Gastrocnemius medialis (tissue), 4 donors: ENCODE measurements at regions of chr14 and their contacts with region 1.

Region 1: GRCh38 chr14:99604283-99604765 is 317 bp upstream of the CCDC85C start:
- DNase-seq: peak; percentile 88 to 93
- ATAC-seq: peak; percentile 86 to 87
- H3K4me3 ChIP-seq: peak overlapping the region; percentile 85 to 96 (median 90)
- H3K27ac ChIP-seq: peak overlapping the region; percentile 94 to 99 (median 96)
- H3K4me1 ChIP-seq: peaks cover 23 to 26% of the 10 kb centered on the region in 2 donors
- H3K27me3 ChIP-seq: no peaks in the 10 kb centered on the region
- CTCF ChIP-seq: peak in 1 of 5 experiments; percentile 10
- POLR2A ChIP-seq: peak; percentile 36 to 78

Region 2: DNA sequence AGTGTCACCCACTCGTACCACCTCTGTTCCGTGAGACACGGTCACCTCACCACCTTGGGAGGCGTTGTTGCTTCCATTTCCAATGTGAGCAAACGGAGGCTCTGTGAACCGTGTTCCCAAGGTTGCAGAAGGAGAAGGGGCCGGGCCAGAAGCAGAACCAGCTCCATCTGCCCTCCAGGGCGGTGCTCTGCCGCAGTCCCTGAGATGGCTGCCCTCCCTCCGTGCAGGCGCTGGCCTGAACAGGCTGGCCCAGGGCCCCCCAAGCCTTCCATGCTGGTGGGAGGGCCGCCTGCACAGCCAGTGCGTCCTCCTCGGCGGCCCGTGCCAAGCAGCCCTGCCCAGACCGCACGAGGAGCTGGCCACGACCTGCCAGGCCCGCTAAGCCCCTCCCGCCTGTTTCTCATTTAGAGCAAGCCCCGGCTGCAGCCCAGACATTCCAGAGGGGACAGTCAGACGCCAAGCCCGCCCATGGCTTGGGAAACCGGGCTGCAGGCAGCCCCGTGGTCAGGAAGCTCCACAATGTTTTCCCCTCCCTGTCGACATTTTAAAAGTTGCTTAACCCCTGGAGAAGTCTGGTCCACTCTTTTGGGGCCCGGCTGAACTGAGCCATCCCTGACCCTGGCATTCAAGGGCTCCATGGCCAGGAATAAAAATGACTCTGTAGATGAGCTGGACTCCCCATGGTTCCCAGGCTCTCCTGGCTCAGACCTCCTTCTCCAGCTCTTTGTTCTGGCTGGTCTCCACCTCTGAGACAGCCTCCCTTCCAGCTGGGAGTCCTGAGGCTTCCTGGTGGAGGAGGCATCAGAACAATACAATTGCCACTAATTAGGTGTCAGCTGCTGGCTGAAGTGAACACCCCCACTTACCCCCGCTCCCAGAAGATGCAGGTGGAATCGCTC is 568.4 kb before region 1 on chr14:
- in situ Hi-C with region 1: no loop called
- intact Hi-C with region 1: loop called (anchors 10 kb)
- DNase-seq: peak; percentile 62 to 85
- ATAC-seq: peak; percentile 93 to 95
- H3K4me3 ChIP-seq: peak overlapping the region; percentile 1 to 30 (median 23)
- H3K27ac ChIP-seq: peak overlapping the region; percentile 3 to 78 (median 60)
- H3K4me1 ChIP-seq: peaks cover 3 to 9% of the 10 kb centered on the region in 2 donors
- H3K27me3 ChIP-seq: no peaks in the 10 kb centered on the region
- CTCF ChIP-seq: no peak
- POLR2A ChIP-seq: no peak

Region 3: GRCh38 chr14:99480917-99481744 is 123.2 kb before region 1 on chr14 and contains the start of gene CCNK:
- in situ Hi-C with region 1: no loop called
- intact Hi-C with region 1: loop called (anchors 1 kb)
- DNase-seq: peak; percentile 100
- ATAC-seq: peak; percentile 85 to 87
- H3K4me3 ChIP-seq: peak within 1 kb of the TSS; percentile 89 to 100 (median 94)
- H3K27ac ChIP-seq: peak within 1 kb of the TSS; percentile 92 to 98 (median 95)
- H3K4me1 ChIP-seq: peaks cover 42 to 60% of the 10 kb centered on the region in 2 donors
- H3K27me3 ChIP-seq: no peaks in the 10 kb centered on the region
- CTCF ChIP-seq: peak in 1 of 5 experiments; percentile 12
- POLR2A ChIP-seq: peak; percentile 92 to 96
- total RNA-seq, gene CCNK: 15.0 to 35.3 (median 19.1) TPM

Region 4: DNA sequence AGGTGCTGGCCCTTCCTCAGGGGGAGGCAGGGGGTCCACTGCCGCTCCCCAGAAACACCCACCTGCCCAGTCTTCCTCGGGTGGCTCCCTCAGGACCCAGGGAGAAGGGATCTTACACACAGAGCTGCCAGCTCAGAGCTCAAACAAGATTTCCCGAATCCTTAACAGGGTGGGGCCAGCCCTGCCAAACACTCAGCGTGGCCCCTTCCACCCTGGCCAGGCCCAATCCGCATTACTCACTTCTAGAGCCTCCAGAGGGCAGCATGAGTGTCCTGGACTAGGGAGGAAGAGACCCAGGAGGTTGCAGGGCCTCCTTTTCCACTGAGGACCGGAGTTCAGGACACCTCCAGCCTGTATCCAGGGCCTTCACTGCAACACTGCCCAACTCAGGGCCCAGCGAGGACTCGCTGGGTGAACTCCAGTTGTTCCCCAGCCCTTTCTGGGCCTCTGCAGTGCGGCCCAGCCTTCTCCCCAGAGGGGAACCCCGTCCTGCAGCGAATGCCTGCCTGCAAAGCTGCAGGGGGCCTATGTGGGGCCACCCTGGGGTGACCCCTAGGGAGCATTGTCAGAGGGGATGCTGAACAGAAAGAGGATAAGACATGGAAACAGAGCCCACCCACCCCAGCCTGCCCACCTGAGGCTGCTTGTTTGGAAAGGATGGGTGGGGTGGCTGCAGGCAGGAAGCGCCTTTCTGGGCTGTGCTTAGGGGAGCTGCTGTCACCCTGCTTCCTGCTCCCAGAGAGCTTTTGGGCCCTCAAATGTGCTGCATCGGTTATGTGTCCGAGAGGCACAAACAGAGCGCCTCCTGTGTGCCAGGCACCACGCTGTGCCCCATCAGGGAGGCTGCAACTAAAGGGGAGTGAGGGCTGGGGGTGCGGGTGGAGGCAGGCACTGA is 79.3 kb before region 1 on chr14:
- in situ Hi-C with region 1: no loop called
- intact Hi-C with region 1: no loop called
- DNase-seq: no peak
- ATAC-seq: peak in 1 of 2 donors; percentile 28
- H3K4me3 ChIP-seq: no peak overlapping the region
- H3K27ac ChIP-seq: peak overlapping the region in 2 of 4 donors; percentile 4 to 46
- H3K4me1 ChIP-seq: no peaks in the 10 kb centered on the region
- H3K27me3 ChIP-seq: no peaks in the 10 kb centered on the region
- CTCF ChIP-seq: no peak
- POLR2A ChIP-seq: no peak

Region 5: GRCh38 chr14:99563233-99564129 is 40.8 kb before region 1 on chr14:
- in situ Hi-C with region 1: no loop called
- intact Hi-C with region 1: loop called (anchors 2 kb)
- DNase-seq: peak; percentile 43 to 66
- ATAC-seq: peak; percentile 67 to 73
- H3K4me3 ChIP-seq: no peak overlapping the region
- H3K27ac ChIP-seq: no peak overlapping the region
- H3K4me1 ChIP-seq: peaks cover 21 to 35% of the 10 kb centered on the region in 2 donors
- H3K27me3 ChIP-seq: no peaks in the 10 kb centered on the region
- CTCF ChIP-seq: peak in 3 of 5 experiments; percentile 46 to 57 (median 48)
- POLR2A ChIP-seq: no peak

Region 6: DNA sequence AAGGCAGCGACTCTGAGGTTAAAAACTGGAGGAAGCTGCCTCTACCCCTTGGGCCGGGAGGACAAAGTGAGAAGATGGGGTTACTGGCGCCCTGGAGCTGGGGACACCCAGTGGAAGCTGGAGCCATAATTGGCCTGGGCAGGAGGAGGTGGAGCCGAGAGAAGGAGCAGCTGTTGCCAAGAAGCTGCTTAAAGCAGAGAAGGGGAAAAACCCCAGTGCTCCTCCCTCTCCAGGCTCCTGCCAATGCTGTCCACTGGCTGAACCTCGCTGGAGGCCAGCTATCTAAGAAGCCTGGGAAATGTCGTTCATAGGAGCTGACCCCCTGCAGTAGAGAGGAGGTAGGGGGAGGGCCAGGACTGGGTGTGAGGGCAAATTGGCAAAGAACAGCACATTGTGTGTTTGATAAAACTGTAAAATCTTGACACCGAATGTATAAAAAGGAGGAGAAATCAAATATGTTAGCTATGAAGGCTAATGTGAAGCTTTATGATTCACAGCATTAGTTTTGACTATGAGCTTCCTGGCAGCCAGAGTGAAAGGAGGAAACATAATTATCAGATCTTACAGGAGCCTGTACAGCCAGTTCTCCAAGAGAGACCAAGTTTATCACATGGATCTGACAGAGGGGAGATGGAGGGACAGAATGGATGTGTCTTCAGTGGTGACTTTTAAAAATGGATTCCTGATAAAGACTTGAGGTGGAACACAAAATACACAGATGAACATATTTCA is 50.1 kb after region 1 on chr14:
- in situ Hi-C with region 1: no loop called
- intact Hi-C with region 1: no loop called
- DNase-seq: no peak
- ATAC-seq: peak in 1 of 2 donors; percentile 56
- H3K4me3 ChIP-seq: no peak overlapping the region
- H3K27ac ChIP-seq: no peak overlapping the region
- H3K4me1 ChIP-seq: no peaks in the 10 kb centered on the region
- H3K27me3 ChIP-seq: peaks cover 7 to 29% (median 16%) of the 10 kb centered on the region in 3 donors
- CTCF ChIP-seq: no peak
- POLR2A ChIP-seq: no peak

Region 7: GRCh38 chr14:99683619-99684355 is 79.5 kb after region 1 on chr14 and contains the start of gene CYP46A1:
- in situ Hi-C with region 1: no loop called
- intact Hi-C with region 1: loop called (anchors 1 kb)
- DNase-seq: peak; percentile 100
- ATAC-seq: peak; percentile 87 to 94
- H3K4me3 ChIP-seq: peak within 1 kb of the TSS; percentile 82 to 99 (median 90)
- H3K27ac ChIP-seq: peak within 1 kb of the TSS; percentile 75 to 90 (median 88)
- H3K4me1 ChIP-seq: peaks cover 7 to 11% of the 10 kb centered on the region in 2 donors
- H3K27me3 ChIP-seq: no peaks in the 10 kb centered on the region
- CTCF ChIP-seq: peak in 1 of 5 experiments; percentile 18
- POLR2A ChIP-seq: no peak
- total RNA-seq, gene CYP46A1: 0.18 to 2.2 (median 0.45) TPM

Region 8: GRCh38 chr14:100213956-100214774 is 609.8 kb after region 1 on chr14:
- in situ Hi-C with region 1: no loop called
- intact Hi-C with region 1: loop called (anchors 10 kb)
- DNase-seq: peak; percentile 64 to 80
- ATAC-seq: peak; percentile 94 to 95
- H3K4me3 ChIP-seq: peak overlapping the region; percentile 74 to 97 (median 94)
- H3K27ac ChIP-seq: peak overlapping the region; percentile 85 to 97 (median 96)
- H3K4me1 ChIP-seq: peaks cover 6 to 7% of the 10 kb centered on the region in 2 donors
- H3K27me3 ChIP-seq: no peaks in the 10 kb centered on the region
- CTCF ChIP-seq: no peak
- POLR2A ChIP-seq: peak; percentile 73 to 74

Region 9: GRCh38 chr14:100547633-100548294 is 943.4 kb after region 1 on chr14:
- in situ Hi-C with region 1: no loop called
- intact Hi-C with region 1: loop called (anchors 5 kb)
- DNase-seq: peak; percentile 6 to 28
- ATAC-seq: peak in 1 of 2 donors; percentile 24
- H3K4me3 ChIP-seq: no peak overlapping the region
- H3K27ac ChIP-seq: no peak overlapping the region
- H3K4me1 ChIP-seq: peaks cover 0 to 8% of the 10 kb centered on the region in 2 donors
- H3K27me3 ChIP-seq: no peaks in the 10 kb centered on the region
- CTCF ChIP-seq: no peak
- POLR2A ChIP-seq: no peak